H1 (cell line): ENCODE measurements at regions of chr7 and their contacts with region 1.

Region 1: GRCh38 chr7:95545078-95545498 is 51.2 kb downstream of the PDK4 start:
- DNase-seq: no peak
- H3K4me3 ChIP-seq: no peak overlapping the region
- H3K27ac ChIP-seq: no peak overlapping the region
- H3K4me1 ChIP-seq: no peaks in the 10 kb centered on the region
- H3K27me3 ChIP-seq: no peaks in the 10 kb centered on the region
- CTCF ChIP-seq: peak in 2 of 3 experiments; percentile 51 to 63; a peak in 3 of 4 replicates
- EP300 ChIP-seq: no peak
- POLR2A ChIP-seq: no peak
- RAD21 ChIP-seq: peak; percentile 51 to 57; a peak in 3 of 4 replicates

Region 2: DNA sequence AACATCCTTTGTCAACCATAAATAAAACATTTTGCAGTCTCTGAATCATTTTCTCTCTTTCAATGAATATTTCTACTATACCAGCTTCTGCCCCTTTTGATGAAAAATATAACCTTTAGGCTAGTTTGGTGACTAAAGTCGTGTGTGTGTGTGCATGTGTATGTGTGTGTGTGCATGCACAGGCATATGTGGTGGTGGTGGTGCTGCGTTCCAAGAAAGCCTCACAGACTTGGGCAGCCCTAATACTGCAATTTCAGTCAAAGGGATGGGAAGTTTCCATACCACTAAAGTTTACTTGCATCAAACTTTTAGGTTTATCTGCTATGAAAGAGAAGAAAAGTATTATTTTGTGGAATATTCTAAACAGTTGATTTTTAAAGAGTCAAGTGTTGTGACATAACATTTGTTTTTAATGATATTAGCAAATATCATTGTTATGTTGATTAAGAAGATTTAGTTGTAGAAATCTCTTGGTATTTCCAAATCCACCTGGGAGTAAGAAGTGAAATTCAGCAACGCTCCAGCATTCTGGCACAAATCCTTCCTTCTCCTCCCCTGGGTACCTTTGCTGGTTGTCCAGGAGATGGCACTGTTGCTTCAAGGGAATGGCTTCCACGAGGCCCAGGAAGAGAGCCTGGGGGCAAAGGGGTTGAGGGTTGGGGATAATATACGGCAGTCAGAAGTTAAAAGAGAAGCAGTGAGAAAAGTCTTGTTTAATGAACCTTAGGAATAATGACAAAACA is 17.9 kb before region 1 on chr7:
- CTCF ChIA-PET with region 1: interaction called, 86 read pairs
- POLR2A ChIA-PET with region 1: no interaction called
- DNase-seq: peak in 1 of 2 experiments; percentile 67
- H3K4me3 ChIP-seq: no peak overlapping the region
- H3K27ac ChIP-seq: no peak overlapping the region
- H3K4me1 ChIP-seq: no peaks in the 10 kb centered on the region
- H3K27me3 ChIP-seq: no peaks in the 10 kb centered on the region
- CTCF ChIP-seq: peak; percentile 83 to 94 (median 86)
- EP300 ChIP-seq: no peak
- POLR2A ChIP-seq: no peak
- RAD21 ChIP-seq: peak; percentile 98

Region 3: GRCh38 chr7:95534796-95535195 is 10.3 kb before region 1 on chr7:
- CTCF ChIA-PET with region 1: interaction called, 86 read pairs
- POLR2A ChIA-PET with region 1: no interaction called
- DNase-seq: no peak
- H3K4me3 ChIP-seq: no peak overlapping the region
- H3K27ac ChIP-seq: no peak overlapping the region
- H3K4me1 ChIP-seq: no peaks in the 10 kb centered on the region
- H3K27me3 ChIP-seq: peaks cover 0 to 1% (median 0%) of the 10 kb centered on the region in 4 experiments; a peak in 1 of 7 replicates
- CTCF ChIP-seq: no peak
- EP300 ChIP-seq: no peak
- POLR2A ChIP-seq: no peak
- RAD21 ChIP-seq: no peak

Region 4: DNA sequence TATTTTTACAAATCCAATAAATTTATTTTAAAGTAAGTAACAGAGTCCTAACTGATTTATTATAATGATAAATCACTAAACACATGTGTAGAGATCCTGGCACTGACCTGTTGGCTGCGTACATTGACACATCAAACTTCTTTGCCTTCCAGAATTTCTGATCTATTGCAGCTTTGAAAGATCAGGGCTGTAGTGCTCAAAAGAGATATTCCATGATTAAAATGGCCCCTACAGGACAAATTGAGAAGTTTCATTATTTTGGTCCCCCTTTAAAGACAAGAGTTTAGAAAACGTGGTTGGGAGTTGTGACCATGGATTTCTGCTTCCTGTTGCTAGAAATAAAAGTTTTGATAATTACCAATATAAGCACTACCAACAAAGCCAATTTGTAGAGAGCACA is 138.9 kb after region 1 on chr7:
- CTCF ChIA-PET with region 1: interaction called, 187 read pairs
- POLR2A ChIA-PET with region 1: no interaction called
- DNase-seq: no peak
- H3K4me3 ChIP-seq: no peak overlapping the region
- H3K27ac ChIP-seq: no peak overlapping the region
- H3K4me1 ChIP-seq: no peaks in the 10 kb centered on the region
- H3K27me3 ChIP-seq: no peaks in the 10 kb centered on the region
- CTCF ChIP-seq: peak in 1 of 3 experiments; percentile 31; a peak in 1 of 4 replicates
- EP300 ChIP-seq: no peak
- POLR2A ChIP-seq: no peak
- RAD21 ChIP-seq: peak; percentile 52 to 54